Activated CD8-positive, alpha-beta T cell treated with anti-CD3 and anti-CD28 coated beads, Interleukin-2, amount 10 ng/mL, durations not matched to agents 7 days and 5 days (primary cell): ENCODE measurements at regions of chr4 and their contacts with region 1.

Region 1: DNA sequence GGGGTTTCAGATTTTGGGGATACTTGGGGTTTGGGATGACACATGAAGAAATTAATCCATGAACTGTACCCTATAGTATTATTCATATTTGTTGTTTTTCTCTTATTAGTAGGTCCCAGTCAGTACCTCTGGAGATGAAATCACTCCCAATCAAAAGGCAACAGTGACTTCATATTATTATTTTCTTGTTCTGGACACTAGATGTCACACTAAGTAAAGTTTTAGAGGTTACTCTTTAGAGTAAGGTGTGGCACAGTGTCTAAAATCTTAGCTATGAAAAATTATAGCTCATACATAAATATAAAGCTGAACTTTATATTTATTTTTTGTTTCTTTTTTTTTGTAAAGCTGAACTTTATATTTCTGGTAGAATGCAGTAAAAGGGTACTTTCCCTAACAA is 35.1 kb downstream of the FAM114A1 start:
- DNase-seq: no peak
- ATAC-seq: peak; percentile 76
- H3K4me3 Mint-ChIP-seq: no peak overlapping the region
- H3K27ac Mint-ChIP-seq: no peak overlapping the region
- H3K4me1 Mint-ChIP-seq: peaks cover 6% of the 10 kb centered on the region
- H3K27me3 Mint-ChIP-seq: peaks cover 5% of the 10 kb centered on the region

Region 2: GRCh38 chr4:38856524-38857337 is 46.0 kb before region 1 on chr4 and contains the start of gene TLR6:
- CTCF ChIA-PET with region 1: interaction called, 14 read pairs
- POLR2A ChIA-PET with region 1: no interaction called
- DNase-seq: peak; percentile 88
- ATAC-seq: peak; percentile 56
- H3K4me3 Mint-ChIP-seq: peak within 1 kb of the TSS; percentile 83
- H3K27ac Mint-ChIP-seq: peak within 1 kb of the TSS; percentile 95
- H3K4me1 Mint-ChIP-seq: peaks cover 42% of the 10 kb centered on the region
- H3K27me3 Mint-ChIP-seq: peaks cover 5% of the 10 kb centered on the region
- total RNA-seq, gene TLR6: 3.1 to 3.2 TPM

Region 3: GRCh38 chr4:38914854-38915253 is 12.2 kb after region 1 on chr4:
- CTCF ChIA-PET with region 1: interaction called, 14 read pairs
- POLR2A ChIA-PET with region 1: no interaction called
- DNase-seq: no peak
- ATAC-seq: peak; percentile 27
- H3K4me3 Mint-ChIP-seq: peak overlapping the region; percentile 27
- H3K27ac Mint-ChIP-seq: peak overlapping the region; percentile 58
- H3K4me1 Mint-ChIP-seq: peaks cover 9% of the 10 kb centered on the region
- H3K27me3 Mint-ChIP-seq: no peaks in the 10 kb centered on the region

Region 4: GRCh38 chr4:39032218-39033085 is 129.8 kb after region 1 on chr4 and contains the start of gene TMEM156:
- CTCF ChIA-PET with region 1: interaction called, 11 read pairs
- POLR2A ChIA-PET with region 1: no interaction called
- DNase-seq: peak; percentile 44
- ATAC-seq: peak; percentile 88
- H3K4me3 Mint-ChIP-seq: peak within 1 kb of the TSS; percentile 83
- H3K27ac Mint-ChIP-seq: peak within 1 kb of the TSS; percentile 88
- H3K4me1 Mint-ChIP-seq: peaks cover 40% of the 10 kb centered on the region
- H3K27me3 Mint-ChIP-seq: no peaks in the 10 kb centered on the region
- total RNA-seq, gene TMEM156: 12.4 to 14.1 TPM

Region 5: GRCh38 chr4:39134683-39135319 is 232.1 kb after region 1 on chr4:
- CTCF ChIA-PET with region 1: interaction called, 115 read pairs
- POLR2A ChIA-PET with region 1: no interaction called
- DNase-seq: no peak
- ATAC-seq: no peak
- H3K4me3 Mint-ChIP-seq: no peak overlapping the region
- H3K27ac Mint-ChIP-seq: no peak overlapping the region
- H3K4me1 Mint-ChIP-seq: peaks cover 11% of the 10 kb centered on the region
- H3K27me3 Mint-ChIP-seq: no peaks in the 10 kb centered on the region